ENCODE measurements at regions of chr9 and their contacts with region 1.

Region 1: DNA sequence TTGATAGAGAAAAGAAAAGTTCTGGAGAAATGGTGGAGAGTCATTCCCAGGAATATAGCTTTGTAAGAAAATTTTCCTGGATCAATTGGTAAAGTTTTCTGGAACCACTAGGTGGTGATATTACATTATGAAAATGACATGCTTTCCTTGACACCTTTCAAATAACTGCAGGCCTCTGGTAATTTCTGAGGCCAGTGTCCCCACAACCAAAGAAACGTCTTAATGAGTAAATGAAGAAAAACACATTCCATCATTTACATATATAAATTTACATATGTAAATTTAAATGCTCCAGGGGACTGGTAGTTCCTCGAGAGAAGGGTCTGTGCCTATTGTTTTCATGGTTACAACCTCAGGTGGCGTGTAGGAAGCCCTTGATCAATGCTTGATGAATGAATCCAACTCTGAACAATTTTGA is 17.2 kb upstream of the RGS3 start:
- DNase-seq: peak in 1 of 2 experiments; percentile 49
- H3K4me3 ChIP-seq: no peak overlapping the region
- H3K4me3 Mint-ChIP-seq: no peak overlapping the region
- H3K27ac Mint-ChIP-seq: no peak overlapping the region
- H3K4me1 ChIP-seq: 0 out of 2 replicates have a peak, but pooled peaks cover 3% of the 10 kb centered on the region
- H3K4me1 Mint-ChIP-seq: peaks cover 6% of the 10 kb centered on the region
- H3K27me3 ChIP-seq: no peaks in the 10 kb centered on the region
- H3K27me3 Mint-ChIP-seq: no peaks in the 10 kb centered on the region
- CTCF ChIP-seq: peak; percentile 11 to 48

Region 2: GRCh38 chr9:113011911-113012381 is 434.4 kb before region 1 on chr9 and contains the start of gene ZNF883:
- CTCF ChIA-PET with region 1: no interaction called
- POLR2A ChIA-PET with region 1: no interaction called
- intact Hi-C with region 1: no loop called
- DNase-seq: no peak
- H3K4me3 ChIP-seq: no peak within 1 kb of the TSS
- H3K4me3 Mint-ChIP-seq: no peak within 1 kb of the TSS
- H3K27ac Mint-ChIP-seq: no peak within 1 kb of the TSS
- H3K4me1 ChIP-seq: no peaks in the 10 kb centered on the region
- H3K4me1 Mint-ChIP-seq: no peaks in the 10 kb centered on the region
- H3K27me3 ChIP-seq: no peaks in the 10 kb centered on the region
- H3K27me3 Mint-ChIP-seq: peaks cover 3% of the 10 kb centered on the region
- CTCF ChIP-seq: no peak
- total RNA-seq, gene ZNF883: not detected in 2 replicates

Region 3: GRCh38 chr9:113427629-113428028 is 18.7 kb before region 1 on chr9:
- CTCF ChIA-PET with region 1: no interaction called
- POLR2A ChIA-PET with region 1: no interaction called
- intact Hi-C with region 1: no loop called
- DNase-seq: no peak
- H3K4me3 ChIP-seq: no peak overlapping the region
- H3K4me3 Mint-ChIP-seq: no peak overlapping the region
- H3K27ac Mint-ChIP-seq: no peak overlapping the region
- H3K4me1 ChIP-seq: no peaks in the 10 kb centered on the region
- H3K4me1 Mint-ChIP-seq: no peaks in the 10 kb centered on the region
- H3K27me3 ChIP-seq: no peaks in the 10 kb centered on the region
- H3K27me3 Mint-ChIP-seq: no peaks in the 10 kb centered on the region
- CTCF ChIP-seq: no peak

Region 4: GRCh38 chr9:113463418-113464285 is 17.3 kb after region 1 on chr9 and contains the start of gene RGS3:
- CTCF ChIA-PET with region 1: interaction called, 11 read pairs
- POLR2A ChIA-PET with region 1: interaction called, 3 read pairs
- intact Hi-C with region 1: no loop called
- DNase-seq: peak; percentile 91 to 93
- H3K4me3 ChIP-seq: peak within 1 kb of the TSS; percentile 83
- H3K4me3 Mint-ChIP-seq: peak within 1 kb of the TSS; percentile 94
- H3K27ac Mint-ChIP-seq: peak within 1 kb of the TSS; percentile 90
- H3K4me1 ChIP-seq: peaks cover 30% of the 10 kb centered on the region
- H3K4me1 Mint-ChIP-seq: peaks cover 36% of the 10 kb centered on the region
- H3K27me3 ChIP-seq: no peaks in the 10 kb centered on the region
- H3K27me3 Mint-ChIP-seq: no peaks in the 10 kb centered on the region
- CTCF ChIP-seq: peak in 1 of 2 experiments; percentile 13
- total RNA-seq, gene RGS3: 70.8 and 71.1 TPM in 2 replicates

Region 5: DNA sequence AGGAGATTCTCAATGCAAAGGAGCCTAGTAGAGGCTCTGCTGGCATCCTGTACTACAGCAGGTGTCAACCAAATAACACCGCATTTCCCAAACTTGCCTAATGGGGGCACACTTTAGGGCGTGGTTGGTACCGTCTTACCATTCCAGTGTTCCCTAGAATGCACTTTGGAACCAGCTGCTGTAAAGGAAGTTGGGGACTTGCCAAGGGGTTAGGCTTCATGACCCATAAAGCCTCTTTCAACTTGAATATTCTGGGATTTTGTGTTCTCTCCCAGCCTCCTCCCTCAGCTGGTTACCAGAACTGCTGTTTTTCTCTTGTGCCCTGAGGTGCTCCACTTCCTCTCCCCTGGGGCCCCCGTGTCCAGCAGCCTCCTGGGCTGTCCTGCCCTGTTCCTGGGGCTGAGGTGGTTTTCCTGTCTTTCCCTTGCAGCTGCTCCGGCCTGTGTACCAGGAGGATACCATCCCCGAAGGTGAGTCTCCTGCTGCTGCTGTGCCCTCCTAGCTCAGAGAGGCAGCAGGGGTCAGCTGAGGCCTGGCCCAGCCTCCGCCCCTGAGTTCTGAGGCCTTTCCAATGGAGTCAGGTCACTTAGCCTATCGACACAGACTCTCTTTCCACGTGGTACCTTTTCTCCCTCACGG is 61.9 kb after region 1 on chr9:
- CTCF ChIA-PET with region 1: no interaction called
- POLR2A ChIA-PET with region 1: no interaction called
- intact Hi-C with region 1: loop called (anchors 5 kb)
- DNase-seq: peak in 1 of 2 experiments; percentile 36
- H3K4me3 ChIP-seq: no peak overlapping the region
- H3K4me3 Mint-ChIP-seq: no peak overlapping the region
- H3K27ac Mint-ChIP-seq: no peak overlapping the region
- H3K4me1 ChIP-seq: no peaks in the 10 kb centered on the region
- H3K4me1 Mint-ChIP-seq: no peaks in the 10 kb centered on the region
- H3K27me3 ChIP-seq: no peaks in the 10 kb centered on the region
- H3K27me3 Mint-ChIP-seq: no peaks in the 10 kb centered on the region
- CTCF ChIP-seq: peak in 1 of 2 experiments; percentile 17

Region 6: GRCh38 chr9:113657703-113658544 is 211.6 kb after region 1 on chr9:
- CTCF ChIA-PET with region 1: interaction called, 64 read pairs
- POLR2A ChIA-PET with region 1: no interaction called
- intact Hi-C with region 1: loop called (anchors 1 kb)
- DNase-seq: peak; percentile 84 to 87
- H3K4me3 ChIP-seq: no peak overlapping the region
- H3K4me3 Mint-ChIP-seq: no peak overlapping the region
- H3K27ac Mint-ChIP-seq: no peak overlapping the region
- H3K4me1 ChIP-seq: no peaks in the 10 kb centered on the region; the same call in 1 of the 2 replicates
- H3K4me1 Mint-ChIP-seq: no peaks in the 10 kb centered on the region
- H3K27me3 ChIP-seq: no peaks in the 10 kb centered on the region
- H3K27me3 Mint-ChIP-seq: peaks cover 7% of the 10 kb centered on the region
- CTCF ChIP-seq: peak; percentile 93 to 97

Measured in Caco-2 (cell line).